ENCODE measurements at regions of chr9 and their contacts with region 1.

Region 1: GRCh38 chr9:108479989-108480652 is 375.7 kb downstream of the ACTL7B start:
- DNase-seq: no peak
- H3K4me3 ChIP-seq: no peak overlapping the region
- H3K27ac ChIP-seq: no peak overlapping the region
- H3K4me1 ChIP-seq: no peaks in the 10 kb centered on the region
- H3K27me3 ChIP-seq: no peaks in the 10 kb centered on the region
- CTCF ChIP-seq: no peak
- POLR2A ChIP-seq: no peak

Region 2: GRCh38 chr9:107833301-107833700 is 646.8 kb before region 1 on chr9:
- intact Hi-C with region 1: loop called (anchors 5 kb)
- DNase-seq: no peak
- H3K4me3 ChIP-seq: no peak overlapping the region
- H3K27ac ChIP-seq: no peak overlapping the region
- H3K4me1 ChIP-seq: no peaks in the 10 kb centered on the region
- H3K27me3 ChIP-seq: no peaks in the 10 kb centered on the region
- CTCF ChIP-seq: no peak
- POLR2A ChIP-seq: no peak

Region 3: DNA sequence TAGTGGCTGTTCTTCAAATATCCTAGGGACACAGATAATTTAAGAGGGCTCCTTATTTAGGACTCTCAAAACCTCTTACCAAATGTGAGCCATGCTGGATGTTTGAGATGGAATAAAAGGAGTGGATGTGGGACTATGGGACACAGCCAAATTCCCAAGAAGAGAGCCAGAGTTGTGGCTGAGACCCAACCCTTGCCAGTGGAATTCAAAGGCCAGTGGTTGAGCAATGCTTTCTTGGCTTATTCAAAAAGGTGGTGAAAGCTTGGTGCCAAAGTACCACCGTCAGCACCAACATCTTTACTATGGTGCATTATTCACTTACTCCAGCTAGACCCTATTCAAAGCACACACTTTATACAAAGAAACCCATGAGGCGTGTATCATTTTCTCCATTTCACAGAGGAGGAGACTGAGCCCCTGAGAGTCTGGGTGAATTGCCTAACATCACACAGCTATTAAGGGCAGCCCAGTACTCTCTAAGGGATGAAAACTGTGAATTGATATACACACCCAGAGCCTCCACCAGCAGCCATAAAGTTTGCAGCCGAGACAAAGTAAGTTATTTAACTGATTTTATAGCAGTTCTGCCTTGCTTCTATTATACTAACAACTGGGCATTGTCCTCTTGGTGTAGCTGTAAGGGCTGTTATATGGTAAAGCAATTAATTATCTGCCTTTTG is 16.1 kb before region 1 on chr9:
- intact Hi-C with region 1: no loop called
- DNase-seq: peak in 1 of 2 donors; percentile 44
- H3K4me3 ChIP-seq: no peak overlapping the region
- H3K27ac ChIP-seq: peak overlapping the region in 1 of 2 donors; percentile 11
- H3K4me1 ChIP-seq: no peaks in the 10 kb centered on the region
- H3K27me3 ChIP-seq: no peaks in the 10 kb centered on the region
- CTCF ChIP-seq: no peak
- POLR2A ChIP-seq: no peak

Measured in breast epithelium (tissue), 4 donors.